ENCODE measurements at regions of chr2 and their contacts with region 1.

Region 1: DNA sequence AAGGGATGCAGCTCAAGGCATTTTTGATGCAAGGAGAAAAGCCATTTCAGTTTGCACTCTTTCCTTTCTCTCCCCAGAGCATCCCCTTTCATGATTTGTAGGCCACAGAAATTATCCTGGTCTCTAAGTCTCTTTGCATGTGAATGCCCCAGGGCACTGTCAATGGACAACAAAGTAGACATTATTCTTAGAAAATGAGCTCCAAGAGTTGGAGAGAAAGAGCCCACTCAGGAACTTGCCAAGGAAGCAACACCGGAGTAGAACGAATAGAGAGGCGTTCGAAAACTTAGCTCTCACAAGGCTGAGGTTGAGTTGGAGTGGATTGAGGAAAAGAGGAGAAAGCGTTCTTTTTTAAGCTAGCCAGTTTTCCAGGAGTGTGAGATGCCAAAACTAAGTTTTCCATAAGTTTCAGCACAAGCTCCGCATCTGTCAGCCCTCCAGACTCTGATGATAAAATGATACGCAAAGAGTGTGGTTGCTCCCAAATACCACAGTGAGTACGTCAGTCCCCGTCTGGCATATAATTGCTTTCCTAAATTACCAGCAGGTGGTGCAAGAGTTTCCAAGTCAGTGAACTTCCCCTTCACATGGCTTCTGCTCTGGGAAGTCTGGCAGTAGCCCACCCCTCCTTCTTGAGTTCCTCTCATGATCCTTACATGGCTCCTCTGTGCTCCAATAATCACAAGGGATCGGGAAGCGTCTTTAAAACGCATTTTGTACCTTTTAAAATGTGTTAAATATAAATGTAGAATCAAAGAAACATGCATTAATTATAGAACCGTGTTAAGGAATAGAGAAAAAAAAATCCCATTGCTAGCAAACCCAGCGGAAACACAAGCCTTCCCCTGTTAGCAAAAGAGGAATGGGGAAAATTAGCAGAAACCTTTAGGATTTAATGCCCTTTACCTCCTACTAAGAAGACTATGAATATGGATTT is 1060.6 kb upstream of the FANCL start:
- DNase-seq: peak; percentile 15
- ATAC-seq: no peak
- H3K4me3 Mint-ChIP-seq: no peak overlapping the region
- H3K27ac Mint-ChIP-seq: no peak overlapping the region
- H3K4me1 Mint-ChIP-seq: no peaks in the 10 kb centered on the region
- H3K27me3 Mint-ChIP-seq: no peaks in the 10 kb centered on the region
- CTCF ChIP-seq: peak; percentile 46

Region 2: DNA sequence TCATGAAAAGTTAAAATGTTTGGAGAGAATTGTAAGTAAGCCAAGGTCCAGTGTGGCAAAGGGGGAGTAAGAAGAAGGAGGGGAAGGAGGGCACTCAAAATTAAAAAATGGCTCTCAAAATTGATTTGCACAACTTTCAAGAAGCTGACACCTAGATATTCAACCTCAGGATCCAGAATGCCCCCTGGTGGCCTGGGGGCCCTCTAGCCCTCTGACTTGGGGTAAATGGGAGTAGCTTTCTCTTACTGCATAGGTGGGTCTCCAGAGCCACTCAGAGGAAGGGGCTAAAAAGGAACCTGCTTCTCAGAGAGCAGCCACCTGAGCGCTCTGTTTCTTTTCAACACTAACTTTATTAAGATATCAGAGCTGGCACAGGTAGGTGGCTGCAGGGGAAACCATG is 283.2 kb after region 1 on chr2:
- CTCF ChIA-PET with region 1: no interaction called
- POLR2A ChIA-PET with region 1: no interaction called
- intact Hi-C with region 1: loop called (anchors 10 kb)
- DNase-seq: peak; percentile 38
- ATAC-seq: no peak
- H3K4me3 Mint-ChIP-seq: no peak overlapping the region
- H3K27ac Mint-ChIP-seq: no peak overlapping the region
- H3K4me1 Mint-ChIP-seq: no peaks in the 10 kb centered on the region
- H3K27me3 Mint-ChIP-seq: no peaks in the 10 kb centered on the region
- CTCF ChIP-seq: no peak

Region 3: DNA sequence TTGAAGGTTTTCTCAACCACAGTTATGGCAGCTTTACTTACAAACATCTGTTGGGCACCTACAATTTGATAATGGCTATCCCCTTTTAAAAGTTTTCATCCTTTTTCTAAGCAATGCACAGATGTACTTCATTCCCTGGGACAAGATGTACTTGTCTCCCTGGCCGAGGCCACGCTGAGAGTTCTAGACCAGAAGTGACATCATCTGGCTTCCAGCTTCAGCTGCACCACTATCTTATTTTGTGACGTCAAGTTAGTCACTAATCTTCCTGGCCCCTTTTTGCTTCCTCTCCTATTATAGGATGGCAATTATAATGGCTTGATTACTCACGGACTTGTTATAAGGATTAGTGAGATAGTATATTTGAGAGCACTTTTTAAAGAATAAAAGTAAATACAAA is 865.4 kb after region 1 on chr2:
- CTCF ChIA-PET with region 1: no interaction called
- POLR2A ChIA-PET with region 1: no interaction called
- intact Hi-C with region 1: loop called (anchors 10 kb)
- DNase-seq: no peak
- ATAC-seq: no peak
- H3K4me3 Mint-ChIP-seq: no peak overlapping the region
- H3K27ac Mint-ChIP-seq: no peak overlapping the region
- H3K4me1 Mint-ChIP-seq: no peaks in the 10 kb centered on the region
- H3K27me3 Mint-ChIP-seq: no peaks in the 10 kb centered on the region
- CTCF ChIP-seq: no peak

Measured in activated CD8-positive, alpha-beta T cell treated with anti-CD3 and anti-CD28 coated beads for 36 hours (primary cell).